CD8-positive, alpha-beta memory T cell (primary cell): ENCODE measurements at regions of chrX and their contacts with region 1.

Region 1: DNA sequence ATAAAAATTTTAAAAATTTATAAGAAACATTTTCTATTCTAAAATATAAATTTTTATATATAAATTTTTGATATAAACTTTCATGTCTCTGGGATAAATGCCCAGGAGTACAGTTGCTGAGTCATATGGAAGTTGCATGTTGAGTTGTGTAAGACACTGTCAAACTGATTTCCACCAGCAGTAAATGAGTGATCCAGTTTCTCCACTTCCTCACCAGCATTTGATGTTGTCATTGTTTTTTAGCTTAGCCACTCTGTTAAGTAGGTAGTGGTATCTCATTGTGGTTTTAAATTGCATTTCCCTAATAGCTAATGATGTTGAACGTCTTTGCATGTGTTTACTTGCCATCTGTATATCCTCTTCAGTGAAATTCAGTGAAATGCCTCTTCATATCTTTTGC is 66.5 kb downstream of the MAMLD1 start:
- DNase-seq: no peak
- H3K4me3 ChIP-seq: no peak overlapping the region
- H3K4me3 Mint-ChIP-seq: no peak overlapping the region
- H3K27ac ChIP-seq: no peak overlapping the region
- H3K27ac Mint-ChIP-seq: no peak overlapping the region
- H3K4me1 ChIP-seq: no peaks in the 10 kb centered on the region
- H3K4me1 Mint-ChIP-seq: peaks cover 0 to 6% (median 0%) of the 10 kb centered on the region in 3 donors
- H3K27me3 ChIP-seq: no peaks in the 10 kb centered on the region
- H3K27me3 Mint-ChIP-seq: no peaks in the 10 kb centered on the region

Region 2: DNA sequence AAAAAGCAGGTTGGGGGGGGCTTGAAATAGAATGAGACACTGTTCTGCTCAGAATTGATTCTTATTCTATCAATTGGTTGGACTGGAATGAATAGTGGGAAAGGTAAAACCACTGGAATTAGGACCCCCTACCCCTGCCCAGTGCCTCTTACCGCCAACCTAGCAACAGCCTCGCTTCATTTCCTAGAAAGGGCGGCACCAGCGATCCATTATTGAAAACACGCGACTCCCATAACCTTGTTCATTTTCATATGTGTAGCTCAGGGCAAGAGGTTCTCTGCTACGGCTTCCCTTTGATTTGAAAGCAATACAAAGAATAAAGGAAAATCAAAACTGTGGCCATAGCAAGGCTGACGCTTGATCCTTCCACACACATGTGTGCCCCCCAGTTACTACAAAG is 958.2 kb before region 1 on chrX:
- CTCF ChIA-PET with region 1: no interaction called
- POLR2A ChIA-PET with region 1: interaction called, 10 read pairs
- DNase-seq: no peak
- H3K4me3 ChIP-seq: no peak overlapping the region
- H3K4me3 Mint-ChIP-seq: peak overlapping the region in 1 of 7 donors; percentile 33
- H3K27ac ChIP-seq: no peak overlapping the region
- H3K27ac Mint-ChIP-seq: no peak overlapping the region
- H3K4me1 ChIP-seq: no peaks in the 10 kb centered on the region
- H3K4me1 Mint-ChIP-seq: peaks cover 5 to 7% (median 5%) of the 10 kb centered on the region in 3 donors
- H3K27me3 ChIP-seq: no peaks in the 10 kb centered on the region
- H3K27me3 Mint-ChIP-seq: peaks cover 3% of the 10 kb centered on the region in 2 donors